Transverse colon (tissue), 4 donors: ENCODE measurements at regions of chr19 and their contacts with region 1.

Region 1: DNA sequence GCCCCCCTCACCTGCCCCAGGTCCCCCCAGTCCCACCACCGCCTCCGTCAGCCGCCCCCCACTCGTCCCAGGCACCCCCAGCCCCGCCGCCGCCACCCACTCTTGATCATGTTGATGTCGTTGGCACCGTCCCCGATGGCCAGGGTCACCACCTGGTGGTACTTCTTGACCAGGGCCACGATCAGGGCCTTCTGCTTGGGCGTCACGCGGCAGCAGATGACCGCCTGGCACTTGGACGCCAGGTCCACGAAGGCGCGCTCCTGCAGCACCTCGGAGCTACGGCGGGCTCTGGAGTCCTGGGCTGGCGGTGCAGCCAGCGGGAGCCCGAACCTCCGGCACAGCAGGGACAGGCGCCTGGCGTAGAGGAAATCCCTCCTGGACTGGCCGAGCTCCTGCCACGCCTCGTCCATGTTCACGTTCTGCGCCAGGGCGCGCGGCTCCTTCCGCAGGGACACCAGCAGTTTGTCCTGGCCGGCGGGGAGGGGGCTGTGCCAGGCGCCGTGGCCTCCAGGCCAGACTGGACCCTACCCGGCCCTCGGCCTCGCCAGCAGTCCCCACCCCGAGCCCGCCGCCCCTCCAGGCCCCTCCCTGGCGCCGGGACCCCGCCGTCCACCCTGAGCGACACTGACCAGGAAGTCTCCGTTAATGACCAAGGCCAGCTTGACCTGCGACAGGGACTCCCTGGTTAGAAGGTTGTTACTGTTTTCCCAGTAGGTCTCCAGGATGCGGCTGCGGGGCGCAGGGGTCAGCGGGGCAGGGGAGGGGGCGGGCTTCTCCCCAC is 22.6 kb downstream of the ATP8B3 start:
- DNase-seq: no peak
- H3K4me3 ChIP-seq: peak overlapping the region in 1 of 4 donors; percentile 16
- H3K27ac ChIP-seq: no peak overlapping the region
- H3K4me1 ChIP-seq: peaks cover 0 to 9% (median 3%) of the 10 kb centered on the region in 4 donors
- H3K27me3 ChIP-seq: peaks cover 54% of the 10 kb centered on the region
- CTCF ChIP-seq: no peak
- EP300 ChIP-seq: no peak
- POLR2A ChIP-seq: no peak

Region 2: DNA sequence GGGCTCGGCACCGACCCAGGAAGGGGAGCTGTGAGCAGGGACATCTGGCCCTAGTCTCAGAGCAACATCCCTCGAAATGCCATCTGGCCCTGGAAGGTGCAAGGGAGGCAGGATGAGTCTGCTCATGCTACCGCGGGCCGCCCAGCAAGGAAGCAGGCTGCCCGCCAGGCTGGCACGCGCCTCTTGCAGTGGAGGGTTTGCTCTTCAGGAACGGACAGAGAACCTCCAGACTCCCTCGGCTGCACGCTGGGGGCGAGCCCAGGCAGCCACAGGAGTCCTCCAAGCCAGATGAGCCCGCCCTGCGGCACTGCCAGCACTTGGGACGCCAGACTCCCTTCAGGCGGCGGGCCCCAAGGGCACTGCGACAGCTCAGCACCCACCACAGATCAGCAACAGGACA is 32.8 kb after region 1 on chr19:
- in situ Hi-C with region 1: no loop called
- intact Hi-C with region 1: loop called (anchors 5 kb)
- DNase-seq: no peak
- H3K4me3 ChIP-seq: no peak overlapping the region
- H3K27ac ChIP-seq: no peak overlapping the region
- H3K4me1 ChIP-seq: peaks cover 0 to 14% (median 6%) of the 10 kb centered on the region in 4 donors
- H3K27me3 ChIP-seq: no peaks in the 10 kb centered on the region
- CTCF ChIP-seq: no peak
- EP300 ChIP-seq: no peak
- POLR2A ChIP-seq: no peak